ENCODE measurements at regions of chr4 and their contacts with region 1.

Region 1: DNA sequence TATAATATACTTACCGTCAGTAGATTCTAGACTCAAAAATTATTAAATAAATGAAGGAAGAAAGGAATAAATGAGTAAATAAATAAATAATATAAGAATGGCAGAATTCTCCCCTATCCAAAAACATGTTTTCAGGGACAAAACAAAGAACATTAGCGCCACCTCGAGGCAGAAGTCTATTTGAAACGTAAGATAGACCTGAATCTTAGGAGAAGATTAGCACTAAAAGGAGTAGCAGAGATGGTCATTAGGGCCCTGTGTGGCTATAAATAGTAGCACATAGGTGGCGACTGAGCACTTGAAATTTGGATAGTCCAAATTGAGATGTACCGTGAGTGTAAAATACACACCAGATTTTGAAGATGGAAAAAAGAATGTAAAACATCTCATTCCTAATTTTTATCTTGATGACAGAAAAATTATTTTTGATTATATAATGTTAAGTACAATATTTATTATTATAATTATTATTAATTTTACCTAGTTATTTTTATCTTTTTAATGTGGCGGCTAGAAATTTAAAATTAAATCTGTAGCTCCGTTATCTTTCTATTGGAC is 24.3 kb upstream of the SRD5A3 start:
- DNase-seq: peak in 1 of 2 donors; percentile 88
- ATAC-seq: peak in 6 of 8 donors; percentile 17 to 69 (median 52)
- H3K4me3 ChIP-seq: no peak overlapping the region
- H3K27ac ChIP-seq: no peak overlapping the region
- H3K4me1 ChIP-seq: peaks cover 0 to 27% (median 13%) of the 10 kb centered on the region in 9 donors
- H3K27me3 ChIP-seq: no peaks in the 10 kb centered on the region
- CTCF ChIP-seq: peak; percentile 44 to 84 (median 68)

Region 2: DNA sequence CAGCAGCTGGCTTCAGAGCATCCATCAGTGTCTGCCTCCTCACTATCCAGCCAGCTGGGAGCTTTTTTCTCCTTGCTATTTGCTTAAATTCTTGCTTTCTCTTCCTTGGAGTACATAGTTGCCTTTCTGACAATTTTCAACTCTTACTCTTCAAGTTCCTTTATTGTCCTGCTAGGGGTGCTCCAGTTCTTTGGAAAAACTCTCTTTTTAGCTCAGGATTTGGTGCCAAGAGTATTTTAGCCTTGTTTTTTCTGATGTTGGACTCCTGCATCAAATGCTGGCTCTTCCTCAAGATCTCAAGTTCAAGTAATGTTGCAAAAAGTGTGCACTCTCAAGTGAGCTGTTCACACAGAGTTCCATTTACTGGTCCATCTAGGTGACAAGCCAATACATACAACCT is 322.8 kb before region 1 on chr4:
- intact Hi-C with region 1: loop called (anchors 1 to 10 kb)
- DNase-seq: no peak
- ATAC-seq: peak in 7 of 8 donors; percentile 43 to 84 (median 65)
- H3K4me3 ChIP-seq: no peak overlapping the region
- H3K27ac ChIP-seq: no peak overlapping the region
- H3K4me1 ChIP-seq: peaks cover 0 to 15% (median 1%) of the 10 kb centered on the region in 9 donors
- H3K27me3 ChIP-seq: no peaks in the 10 kb centered on the region
- CTCF ChIP-seq: peak; percentile 49 to 72 (median 56)